Heart right ventricle (tissue), 16 donors: ENCODE measurements at regions of chr2 and their contacts with region 1.

Region 1: DNA sequence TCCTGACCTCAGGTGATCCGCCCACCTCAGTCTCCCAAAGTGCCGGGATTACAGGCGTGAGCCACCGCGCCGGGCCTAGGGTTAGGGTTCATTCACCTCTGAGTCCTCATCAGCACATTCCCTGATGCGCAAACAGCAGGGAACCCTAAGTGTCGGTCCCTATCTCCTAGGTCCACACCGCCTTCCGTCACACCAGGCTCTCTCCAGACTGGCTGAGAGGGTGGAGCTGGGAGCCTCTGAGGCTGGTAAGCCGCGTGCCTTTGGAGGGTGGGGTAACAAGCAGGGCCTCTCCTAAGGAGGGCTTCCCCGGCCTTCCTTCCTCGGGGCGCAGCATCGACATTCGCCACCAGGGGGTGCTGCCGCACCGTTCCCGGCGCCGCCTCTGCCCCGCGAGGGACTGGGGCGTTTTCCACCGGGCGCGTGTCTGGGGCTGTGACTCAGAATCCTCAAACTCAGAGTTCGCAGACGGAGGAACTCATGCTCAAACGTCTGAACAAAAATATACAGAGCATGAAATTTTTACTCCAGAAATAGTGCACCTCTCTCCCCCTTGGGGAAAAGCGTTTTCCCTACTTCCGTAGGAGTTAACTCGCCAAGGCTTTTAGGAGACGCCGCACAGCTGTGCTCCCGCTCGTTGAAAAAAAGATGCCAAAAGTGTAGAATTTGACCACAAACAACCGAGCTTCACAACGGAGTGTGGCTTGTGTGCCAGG is 63.9 kb upstream of the ASAP2 start:
- DNase-seq: peak; percentile 87 to 90
- ATAC-seq: peak; percentile 84 to 95 (median 91)
- H3K4me3 ChIP-seq: peak overlapping the region in 7 of 10 donors; percentile 12 to 47 (median 24)
- H3K27ac ChIP-seq: peak overlapping the region in 9 of 10 donors; percentile 6 to 67 (median 42)
- H3K4me1 ChIP-seq: peaks cover 5 to 15% (median 10%) of the 10 kb centered on the region in 9 donors
- H3K27me3 ChIP-seq: peaks cover 0 to 5% (median 0%) of the 10 kb centered on the region in 7 donors
- CTCF ChIP-seq: peak in 7 of 9 donors; percentile 98 to 100 (median 99)

Region 2: GRCh38 chr2:9191041-9191481 is 48.4 kb after region 1 on chr2:
- intact Hi-C with region 1: loop called in 3 of 10 experiments (anchors 5 kb)
- DNase-seq: peak; percentile 80 to 86
- ATAC-seq: peak; percentile 86 to 97 (median 90)
- H3K4me3 ChIP-seq: no peak overlapping the region
- H3K27ac ChIP-seq: peak overlapping the region; percentile 57 to 90 (median 82)
- H3K4me1 ChIP-seq: peaks cover 0 to 44% (median 24%) of the 10 kb centered on the region in 9 donors
- H3K27me3 ChIP-seq: no peaks in the 10 kb centered on the region
- CTCF ChIP-seq: no peak

Region 3: DNA sequence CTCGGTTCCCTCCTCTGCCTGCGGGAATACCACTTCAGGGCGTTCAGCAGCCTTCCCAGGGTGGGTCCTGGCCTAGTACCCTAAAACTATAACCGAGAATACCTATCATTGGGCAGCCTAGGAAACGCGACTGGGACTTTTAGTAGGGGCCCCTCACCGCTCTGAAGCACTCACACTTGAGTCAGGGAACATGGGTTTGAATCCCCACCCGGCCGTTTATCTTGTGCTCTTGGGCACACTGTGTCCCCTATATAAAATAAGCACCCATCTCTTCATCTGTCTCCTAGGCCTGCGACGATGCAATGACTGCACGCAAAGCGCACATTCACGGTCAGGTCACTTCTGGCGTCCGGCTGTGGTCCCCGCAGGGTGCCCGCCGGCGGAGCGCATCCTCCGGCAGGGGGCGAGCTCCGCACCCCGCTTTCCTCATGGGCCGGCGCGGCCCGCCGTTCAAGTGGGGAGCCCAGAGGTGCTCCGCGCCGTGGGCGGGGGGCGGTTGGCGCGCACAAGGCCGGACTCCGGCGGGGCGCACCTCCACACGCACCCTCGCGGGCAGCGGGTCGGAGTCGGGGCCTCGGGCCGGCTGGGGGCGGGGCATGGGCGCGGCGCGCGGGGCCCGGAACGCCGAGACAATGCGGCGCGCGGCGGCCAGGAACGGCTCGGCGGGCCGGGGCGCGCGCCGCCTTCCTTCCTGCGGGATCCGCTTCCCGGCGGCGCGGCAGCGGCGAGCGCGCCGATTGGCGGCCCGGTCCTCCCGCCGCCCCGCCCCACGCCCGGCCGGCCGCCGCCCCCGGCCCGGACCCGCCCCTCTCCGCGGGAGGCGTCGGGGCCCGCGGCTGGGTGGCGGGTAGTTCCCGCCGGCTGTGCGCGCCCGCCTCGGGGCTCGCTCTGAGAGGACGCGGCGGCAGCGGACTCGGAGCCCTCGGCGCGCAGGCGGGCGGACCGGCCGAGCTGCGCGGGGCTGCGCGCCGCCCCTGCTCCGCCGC is 63.5 kb after region 1 on chr2 and contains the start of gene ASAP2:
- intact Hi-C with region 1: loop called in 5 of 10 experiments (anchors 5 to 10 kb)
- DNase-seq: peak; percentile 67 to 81
- ATAC-seq: peak; percentile 69 to 85 (median 82)
- H3K4me3 ChIP-seq: peak within 1 kb of the TSS; percentile 70 to 96 (median 87)
- H3K27ac ChIP-seq: peak within 1 kb of the TSS; percentile 76 to 95 (median 90)
- H3K4me1 ChIP-seq: peaks cover 0 to 40% (median 26%) of the 10 kb centered on the region in 9 donors
- H3K27me3 ChIP-seq: peaks cover 0 to 19% (median 0%) of the 10 kb centered on the region in 7 donors
- CTCF ChIP-seq: peak; percentile 77 to 94 (median 79)
- total RNA-seq, gene ASAP2: 9.9 to 16.2 (median 11.8) TPM

Region 4: DNA sequence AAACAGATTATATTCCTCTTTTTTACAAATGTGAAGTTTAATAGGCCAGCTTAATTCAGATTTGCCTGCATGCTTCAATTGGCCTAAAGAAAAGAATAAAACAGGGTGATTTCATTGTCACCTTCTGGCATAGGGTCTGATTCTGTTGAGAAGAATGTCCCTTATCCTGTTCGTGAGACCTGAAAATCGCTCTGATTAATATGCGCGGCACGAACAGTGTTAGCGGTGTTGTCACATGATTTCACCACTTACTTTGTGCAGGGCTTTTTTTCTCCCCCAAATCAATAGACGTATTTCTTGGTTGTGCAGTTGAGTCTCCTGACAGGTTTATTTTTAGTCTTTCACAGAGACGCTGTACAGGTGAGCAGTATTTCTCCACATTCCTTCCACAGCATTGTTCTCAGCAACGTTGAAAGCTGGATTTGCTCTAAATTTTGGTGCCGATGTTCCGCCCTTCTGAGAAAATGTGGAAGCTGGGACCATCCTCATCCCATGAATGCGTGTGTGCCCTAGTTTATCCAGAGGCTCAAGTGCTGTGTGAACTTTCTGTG is 198.7 kb after region 1 on chr2:
- intact Hi-C with region 1: loop called in 2 of 10 experiments (anchors 5 to 10 kb)
- DNase-seq: no peak
- ATAC-seq: no peak
- H3K4me3 ChIP-seq: no peak overlapping the region
- H3K27ac ChIP-seq: no peak overlapping the region
- H3K4me1 ChIP-seq: peaks cover 0 to 21% (median 11%) of the 10 kb centered on the region in 9 donors
- H3K27me3 ChIP-seq: no peaks in the 10 kb centered on the region
- CTCF ChIP-seq: no peak

Region 5: DNA sequence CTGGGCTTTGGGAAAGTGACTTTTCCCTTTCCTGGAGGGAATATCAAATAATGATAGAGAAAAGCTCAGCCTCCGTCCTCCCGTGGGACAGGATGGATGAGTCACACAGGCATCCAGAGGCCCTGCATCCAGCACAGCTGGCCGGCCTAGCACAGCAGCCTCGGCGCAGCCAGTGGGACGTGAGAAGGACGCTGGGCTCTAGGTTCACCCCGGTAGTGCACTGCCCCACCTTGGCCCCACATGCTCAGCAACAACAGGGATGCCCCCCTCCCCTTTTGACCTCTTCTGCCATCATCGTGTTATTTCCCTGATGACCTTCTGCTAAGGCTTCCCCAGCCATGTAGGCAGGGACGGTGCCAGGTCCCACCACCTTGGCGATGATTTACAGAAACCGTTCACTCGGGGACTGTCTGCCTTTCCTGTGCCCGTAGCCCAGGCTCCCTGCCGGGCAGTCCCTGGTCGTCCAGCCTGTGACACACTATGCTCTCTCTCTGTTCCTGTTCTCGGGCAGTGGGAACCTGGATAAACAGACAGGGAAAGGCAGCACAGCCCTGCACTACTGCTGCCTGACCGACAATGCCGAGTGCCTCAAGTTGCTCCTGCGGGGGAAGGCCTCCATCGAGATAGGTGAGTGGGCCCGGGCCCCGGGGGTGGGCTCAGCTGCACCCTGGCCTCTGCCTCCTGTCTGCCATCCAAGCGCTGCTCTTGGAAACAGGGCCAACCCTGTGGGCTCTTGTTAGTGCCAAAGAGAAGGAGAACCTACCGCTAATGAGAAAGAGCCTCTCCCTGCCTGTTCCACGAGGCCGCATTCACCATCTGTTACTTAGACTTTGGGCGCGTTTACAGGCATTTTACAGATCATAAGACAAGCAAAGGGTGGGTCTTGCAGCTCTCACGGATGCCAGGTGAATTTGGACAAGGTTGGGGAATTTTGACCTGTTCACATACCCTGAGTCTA is 236.0 kb after region 1 on chr2:
- intact Hi-C with region 1: loop called in 2 of 10 experiments (anchors 5 to 10 kb)
- DNase-seq: peak; percentile 81 to 88
- ATAC-seq: peak; percentile 84 to 92 (median 86)
- H3K4me3 ChIP-seq: no peak overlapping the region
- H3K27ac ChIP-seq: peak overlapping the region; percentile 27 to 81 (median 67)
- H3K4me1 ChIP-seq: peaks cover 0 to 48% (median 32%) of the 10 kb centered on the region in 9 donors
- H3K27me3 ChIP-seq: no peaks in the 10 kb centered on the region
- CTCF ChIP-seq: no peak

Region 6: GRCh38 chr2:9941196-9941995 is 798.7 kb after region 1 on chr2:
- intact Hi-C with region 1: no loop called
- DNase-seq: no peak
- ATAC-seq: no peak
- H3K4me3 ChIP-seq: no peak overlapping the region
- H3K27ac ChIP-seq: no peak overlapping the region
- H3K4me1 ChIP-seq: no peaks in the 10 kb centered on the region
- H3K27me3 ChIP-seq: peaks cover 0 to 29% (median 5%) of the 10 kb centered on the region in 7 donors
- CTCF ChIP-seq: no peak